Endothelial cell of umbilical vein (primary cell): ENCODE measurements at regions of chr2 and their contacts with region 1.

Region 1: GRCh38 chr2:96554293-96555145 is 18.0 kb downstream of the ARID5A start:
- DNase-seq: peak; percentile 65
- H3K4me3 ChIP-seq: no peak overlapping the region
- H3K27ac ChIP-seq: no peak overlapping the region
- H3K4me1 ChIP-seq: no peaks in the 10 kb centered on the region
- H3K27me3 ChIP-seq: no peaks in the 10 kb centered on the region
- CTCF ChIP-seq: peak; percentile 91 to 92
- POLR2A ChIP-seq: no peak

Region 2: DNA sequence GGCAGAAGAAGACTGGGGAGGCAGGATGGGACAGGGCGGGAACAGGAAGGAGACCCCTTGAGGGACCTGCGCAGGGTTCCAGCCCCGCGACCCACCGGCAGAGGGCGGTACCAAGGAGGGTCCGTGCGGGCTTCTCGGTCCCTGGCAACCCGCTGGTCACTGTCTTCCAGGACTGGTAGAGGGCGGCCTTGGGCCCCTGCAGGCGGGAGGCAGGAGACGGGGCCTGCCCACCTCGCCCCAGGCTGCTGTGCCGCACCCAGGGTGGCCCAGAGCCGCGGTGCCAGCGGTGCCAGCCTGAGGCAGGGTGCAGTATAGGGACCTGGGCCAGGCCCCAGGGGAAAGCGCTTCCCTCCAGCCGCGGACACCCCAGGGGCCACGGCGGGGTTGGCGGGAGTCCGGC is 83.9 kb before region 1 on chr2:
- CTCF ChIA-PET with region 1: interaction called, 11 read pairs
- POLR2A ChIA-PET with region 1: no interaction called
- dilution Hi-C with region 1: no loop called
- intact Hi-C with region 1: loop called (anchors 1 kb)
- DNase-seq: peak; percentile 54
- H3K4me3 ChIP-seq: no peak overlapping the region
- H3K27ac ChIP-seq: no peak overlapping the region
- H3K4me1 ChIP-seq: no peaks in the 10 kb centered on the region
- H3K27me3 ChIP-seq: peaks cover under 1 to 5% of the 10 kb centered on the region in 2 experiments
- CTCF ChIP-seq: peak; percentile 72 to 92
- POLR2A ChIP-seq: no peak

Region 3: DNA sequence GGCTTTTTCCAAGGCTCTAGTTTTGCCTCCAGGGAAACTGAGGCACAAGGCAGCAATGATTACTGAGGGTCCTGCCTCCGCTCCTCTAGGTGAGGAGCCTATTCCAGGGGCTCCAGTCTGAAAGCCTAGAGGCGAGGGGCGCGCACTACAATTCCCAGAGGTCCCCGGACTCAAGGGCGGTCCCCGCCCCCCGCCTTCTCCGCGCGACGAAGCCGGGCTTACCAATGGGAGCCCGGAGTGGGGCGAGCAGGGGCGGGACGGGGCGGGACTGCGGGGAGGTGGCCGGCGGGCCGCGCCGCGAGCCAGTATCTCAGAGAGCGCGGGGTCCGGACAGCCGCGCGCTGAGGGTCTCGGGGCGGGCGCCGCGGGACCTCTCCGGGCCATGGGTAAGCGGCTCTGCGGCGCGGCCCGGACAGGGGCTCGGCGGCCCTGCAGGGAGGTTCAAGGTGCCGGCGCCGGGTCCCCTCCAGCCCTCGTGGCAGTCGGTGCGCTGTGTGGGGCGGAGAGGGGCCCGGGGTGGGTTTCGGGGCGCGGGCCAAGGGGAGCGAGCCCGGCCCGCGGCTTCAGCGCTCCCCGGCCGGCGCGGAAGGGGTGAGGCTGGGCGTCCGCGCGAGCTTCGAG is 18.0 kb before region 1 on chr2 and contains the start of gene ARID5A:
- CTCF ChIA-PET with region 1: interaction called, 130 read pairs
- POLR2A ChIA-PET with region 1: interaction called, 8 read pairs
- dilution Hi-C with region 1: no loop called
- intact Hi-C with region 1: loop called (anchors 1 kb)
- DNase-seq: peak; percentile 88
- H3K4me3 ChIP-seq: peak within 1 kb of the TSS; percentile 38 to 77 (median 56)
- H3K27ac ChIP-seq: peak within 1 kb of the TSS; percentile 67
- H3K4me1 ChIP-seq: peaks cover 30% of the 10 kb centered on the region
- H3K27me3 ChIP-seq: no peaks in the 10 kb centered on the region
- CTCF ChIP-seq: peak in 1 of 2 donors; percentile 31
- POLR2A ChIP-seq: peak; percentile 85
- total RNA-seq, gene ARID5A: 24.7 and 29.0 TPM in 2 replicates

Region 4: GRCh38 chr2:96584017-96584416 is 29.5 kb after region 1 on chr2:
- CTCF ChIA-PET with region 1: interaction called, 15 read pairs
- POLR2A ChIA-PET with region 1: no interaction called
- dilution Hi-C with region 1: no loop called
- intact Hi-C with region 1: no loop called
- DNase-seq: no peak
- H3K4me3 ChIP-seq: no peak overlapping the region
- H3K27ac ChIP-seq: no peak overlapping the region
- H3K4me1 ChIP-seq: no peaks in the 10 kb centered on the region
- H3K27me3 ChIP-seq: no peaks in the 10 kb centered on the region
- CTCF ChIP-seq: no peak
- POLR2A ChIP-seq: no peak

Region 5: DNA sequence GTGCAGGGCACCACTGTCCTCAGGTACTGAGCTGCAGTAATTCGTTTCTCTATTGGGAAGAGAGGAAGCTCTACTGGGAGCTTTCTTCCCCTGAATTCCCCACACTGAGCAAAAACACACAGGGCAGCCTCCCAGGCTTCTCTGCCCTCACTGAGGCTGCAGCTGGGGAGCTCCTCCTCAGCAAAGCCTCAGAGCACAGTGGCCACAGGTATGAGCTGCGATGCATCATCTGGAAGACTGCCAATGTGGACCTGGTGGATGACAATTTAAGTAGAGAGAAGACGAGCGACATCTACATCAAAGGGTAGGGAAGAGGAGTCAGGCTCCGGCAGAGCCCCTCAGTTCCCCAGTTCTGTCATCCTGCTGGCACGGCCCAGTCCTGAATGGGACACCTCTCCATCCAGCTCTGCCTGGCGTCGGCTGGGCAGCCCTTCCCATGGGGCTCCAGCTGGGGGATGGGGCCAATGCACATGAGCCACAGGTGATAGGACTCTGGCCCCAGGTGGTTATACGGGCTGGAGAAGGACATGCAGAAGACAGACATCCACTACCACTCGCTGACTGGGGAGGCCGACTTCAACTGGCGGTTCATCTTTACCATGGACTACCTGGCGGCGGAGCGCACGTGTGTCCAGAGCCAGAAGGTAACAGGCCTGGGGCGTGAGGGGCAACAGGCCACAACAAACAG is 147.7 kb after region 1 on chr2:
- CTCF ChIA-PET with region 1: no interaction called
- POLR2A ChIA-PET with region 1: no interaction called
- dilution Hi-C with region 1: no loop called
- intact Hi-C with region 1: no loop called
- DNase-seq: no peak
- H3K4me3 ChIP-seq: no peak overlapping the region
- H3K27ac ChIP-seq: no peak overlapping the region
- H3K4me1 ChIP-seq: no peaks in the 10 kb centered on the region
- H3K27me3 ChIP-seq: no peaks in the 10 kb centered on the region
- CTCF ChIP-seq: no peak
- POLR2A ChIP-seq: no peak